Heart left ventricle (tissue), 16 donors: ENCODE measurements at regions of chr1 and their contacts with region 1.

Region 1: GRCh38 chr1:24688621-24689195 is 45.6 kb downstream of the SRRM1 start:
- DNase-seq: peak; percentile 76 to 82 (median 81)
- ATAC-seq: peak; percentile 86 to 90 (median 89)
- H3K4me3 ChIP-seq: no peak overlapping the region
- H3K27ac ChIP-seq: peak overlapping the region in 4 of 12 donors; percentile 12 to 51 (median 18)
- H3K4me1 ChIP-seq: peaks cover 1 to 33% (median 15%) of the 10 kb centered on the region in 12 donors
- H3K27me3 ChIP-seq: no peaks in the 10 kb centered on the region
- CTCF ChIP-seq: peak; percentile 80 to 97 (median 90)
- POLR2A ChIP-seq: no peak

Region 2: GRCh38 chr1:24409535-24409934 is 279.2 kb before region 1 on chr1:
- intact Hi-C with region 1: no loop called
- DNase-seq: no peak
- ATAC-seq: no peak
- H3K4me3 ChIP-seq: no peak overlapping the region
- H3K27ac ChIP-seq: no peak overlapping the region
- H3K4me1 ChIP-seq: peaks cover 0 to 12% (median 8%) of the 10 kb centered on the region in 12 donors
- H3K27me3 ChIP-seq: no peaks in the 10 kb centered on the region
- CTCF ChIP-seq: no peak
- POLR2A ChIP-seq: no peak

Region 3: DNA sequence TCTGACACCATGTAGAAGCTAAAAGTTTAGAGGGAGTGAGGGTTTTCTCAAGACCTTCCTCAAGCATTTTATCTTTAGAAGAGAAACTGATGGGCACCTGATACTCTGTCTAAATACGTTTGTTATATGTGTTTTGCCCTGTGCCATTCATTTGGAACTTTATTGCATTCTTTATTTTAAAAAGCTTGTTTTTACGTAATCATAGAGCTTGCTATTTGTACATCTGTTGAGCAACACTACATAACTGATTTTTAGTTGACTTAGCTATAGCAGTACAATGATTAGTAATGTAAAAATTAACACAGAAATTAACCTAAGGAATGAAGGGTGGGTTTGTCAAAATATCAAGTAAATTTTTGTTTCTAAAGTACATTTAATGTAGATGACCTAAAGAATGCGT is 152.9 kb after region 1 on chr1:
- intact Hi-C with region 1: loop called in 2 of 10 experiments (anchors 2 kb)
- DNase-seq: no peak
- ATAC-seq: no peak
- H3K4me3 ChIP-seq: no peak overlapping the region
- H3K27ac ChIP-seq: no peak overlapping the region
- H3K4me1 ChIP-seq: peaks cover 0 to 5% (median 0%) of the 10 kb centered on the region in 12 donors
- H3K27me3 ChIP-seq: no peaks in the 10 kb centered on the region
- CTCF ChIP-seq: no peak
- POLR2A ChIP-seq: no peak